ENCODE measurements at regions of chr5 and their contacts with region 1.

Region 1: GRCh38 chr5:122896598-122897282 is 51.3 kb downstream of the SNX24 start:
- DNase-seq: no peak
- CTCF ChIP-seq: no peak

Region 2: GRCh38 chr5:122680631-122681350 is 215.9 kb before region 1 on chr5:
- in situ Hi-C with region 1: no loop called
- DNase-seq: no peak
- CTCF ChIP-seq: no peak

Region 3: GRCh38 chr5:122999945-123000563 is 103.3 kb after region 1 on chr5:
- in situ Hi-C with region 1: loop called (anchors 5 kb)
- DNase-seq: peak; percentile 81
- CTCF ChIP-seq: peak; percentile 63

Measured in GM13976 (cell line).